ENCODE measurements at regions of chr5 and their contacts with region 1.

Region 1: GRCh38 chr5:178120868-178121357 is 7.6 kb downstream of the N4BP3 start:
- DNase-seq: peak; percentile 92
- H3K4me3 Mint-ChIP-seq: no peak overlapping the region
- H3K27ac Mint-ChIP-seq: no peak overlapping the region
- H3K4me1 Mint-ChIP-seq: peaks cover 19% of the 10 kb centered on the region
- H3K27me3 Mint-ChIP-seq: peaks cover 62% of the 10 kb centered on the region

Region 2: GRCh38 chr5:178137991-178138390 is 17.1 kb after region 1 on chr5:
- CTCF ChIA-PET with region 1: interaction called, 21 read pairs
- DNase-seq: no peak
- H3K4me3 Mint-ChIP-seq: no peak overlapping the region
- H3K27ac Mint-ChIP-seq: no peak overlapping the region
- H3K4me1 Mint-ChIP-seq: peaks cover 9% of the 10 kb centered on the region
- H3K27me3 Mint-ChIP-seq: no peaks in the 10 kb centered on the region

Region 3: DNA sequence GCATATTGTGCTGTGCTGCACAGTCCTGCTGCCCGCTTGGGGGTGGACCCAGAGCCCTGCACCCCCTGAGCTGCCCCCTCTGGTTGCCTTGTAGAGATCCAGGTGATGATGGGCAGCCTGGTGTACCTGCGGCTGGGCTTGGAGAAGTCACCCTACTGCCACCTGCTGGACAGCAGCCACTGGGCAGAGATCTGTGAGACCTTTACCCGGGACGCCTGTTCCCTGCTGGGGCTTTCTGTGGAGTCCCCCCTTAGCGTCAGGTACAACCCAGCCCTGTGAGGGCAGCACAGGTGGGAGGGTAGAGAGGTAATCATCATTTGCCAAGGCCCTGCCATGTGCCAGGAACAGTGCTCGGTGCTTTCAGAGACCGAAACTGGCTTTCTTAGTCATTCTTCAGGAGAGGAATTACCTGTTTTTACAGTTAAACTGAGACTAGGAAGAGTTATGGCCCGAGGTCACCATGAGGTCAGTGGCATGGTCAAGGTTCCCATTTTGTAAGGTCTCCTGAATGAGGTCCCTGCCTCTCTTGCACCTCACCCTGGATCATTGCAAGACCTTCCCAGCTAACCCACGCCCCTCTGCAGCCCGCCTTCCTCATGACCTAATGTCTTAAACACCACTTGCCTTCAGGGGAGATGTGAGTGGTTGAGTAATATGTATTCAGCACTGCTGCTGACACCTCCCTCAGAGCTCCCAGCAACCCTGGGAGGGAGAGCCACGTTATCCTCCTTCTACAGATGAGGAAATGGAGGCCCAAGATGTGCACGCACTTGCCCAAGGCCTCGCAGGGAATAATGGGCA is 25.3 kb after region 1 on chr5:
- CTCF ChIA-PET with region 1: interaction called, 21 read pairs
- DNase-seq: peak; percentile 85
- H3K4me3 Mint-ChIP-seq: no peak overlapping the region
- H3K27ac Mint-ChIP-seq: no peak overlapping the region
- H3K4me1 Mint-ChIP-seq: peaks cover 34% of the 10 kb centered on the region
- H3K27me3 Mint-ChIP-seq: no peaks in the 10 kb centered on the region

Region 4: GRCh38 chr5:178153573-178154343 is 32.8 kb after region 1 on chr5 and contains the start of gene NHP2:
- CTCF ChIA-PET with region 1: interaction called, 14 read pairs
- DNase-seq: peak; percentile 99
- H3K4me3 Mint-ChIP-seq: peak within 1 kb of the TSS; percentile 95
- H3K27ac Mint-ChIP-seq: peak within 1 kb of the TSS; percentile 90
- H3K4me1 Mint-ChIP-seq: peaks cover 52% of the 10 kb centered on the region
- H3K27me3 Mint-ChIP-seq: no peaks in the 10 kb centered on the region